Dendritic cell treated with granulocyte-macrophage colony-stimulating factor and Interleukin-4, amounts not matched to agents 40 ng/mL and 50 ng/mL, for 4 days (primary cell): ENCODE measurements at regions of chr20 and their contacts with region 1.

Region 1: GRCh38 chr20:41339507-41340326 is 904 bp upstream of the LPIN3 start:
- H3K4me3 Mint-ChIP-seq: peak overlapping the region; percentile 76
- H3K27ac Mint-ChIP-seq: peak overlapping the region; percentile 61
- H3K4me1 Mint-ChIP-seq: peaks cover 9% of the 10 kb centered on the region
- H3K27me3 Mint-ChIP-seq: peaks cover 51% of the 10 kb centered on the region

Region 2: GRCh38 chr20:41306061-41306727 is 33.5 kb before region 1 on chr20:
- intact Hi-C with region 1: no loop called
- H3K4me3 Mint-ChIP-seq: no peak overlapping the region
- H3K27ac Mint-ChIP-seq: no peak overlapping the region
- H3K4me1 Mint-ChIP-seq: peaks cover 19% of the 10 kb centered on the region
- H3K27me3 Mint-ChIP-seq: no peaks in the 10 kb centered on the region

Region 3: DNA sequence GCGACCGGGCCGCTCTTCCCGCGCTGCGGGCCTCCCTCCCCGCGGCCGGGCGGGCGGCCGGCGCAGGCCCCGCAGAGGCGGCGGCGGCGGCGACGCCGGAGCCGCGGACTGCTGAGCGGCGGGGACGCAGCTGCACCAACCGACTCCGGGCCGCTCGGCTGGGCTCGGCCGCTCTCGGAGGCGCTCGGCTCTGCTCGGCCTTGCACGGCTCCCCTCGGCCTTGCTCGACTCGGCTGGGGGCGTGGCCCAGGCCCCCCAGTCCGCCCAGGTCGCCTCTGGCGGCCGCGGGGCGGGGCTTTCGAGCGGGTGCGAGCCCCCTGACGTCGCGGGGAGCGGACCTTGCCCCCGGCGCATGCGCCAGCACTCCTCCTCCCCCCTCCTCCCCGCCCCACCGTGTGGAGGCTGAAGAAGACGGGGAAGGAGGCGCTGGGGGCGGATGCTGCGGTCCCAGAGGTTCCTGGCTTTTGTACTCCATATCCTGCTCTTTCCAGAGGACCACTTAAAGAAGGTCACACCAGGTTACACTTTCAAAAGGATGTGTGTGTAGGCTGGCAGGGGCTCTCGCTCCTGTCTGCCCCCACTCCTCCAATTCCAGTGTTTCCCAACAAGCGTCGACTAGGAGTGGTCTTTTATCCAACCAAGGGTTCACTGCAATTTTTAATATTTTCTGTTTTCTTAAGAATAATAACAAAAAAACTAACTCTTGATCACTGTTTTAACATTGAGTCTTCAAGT is 22.0 kb before region 1 on chr20 and contains the start of gene ZHX3:
- intact Hi-C with region 1: loop called (anchors 1 kb)
- H3K4me3 Mint-ChIP-seq: peak within 1 kb of the TSS; percentile 92
- H3K27ac Mint-ChIP-seq: peak within 1 kb of the TSS; percentile 87
- H3K4me1 Mint-ChIP-seq: peaks cover 18% of the 10 kb centered on the region
- H3K27me3 Mint-ChIP-seq: peaks cover 10% of the 10 kb centered on the region